GM10248 (cell line): ENCODE measurements at regions of chr6 and their contacts with region 1.

Region 1: GRCh38 chr6:88780714-88781389 is 182.6 kb downstream of the RNGTT start:
- DNase-seq: peak; percentile 22
- CTCF ChIP-seq: peak; percentile 50

Region 2: GRCh38 chr6:88761237-88762031 is 19.4 kb before region 1 on chr6:
- CTCF ChIA-PET with region 1: interaction called, 10 read pairs
- POLR2A ChIA-PET with region 1: no interaction called
- DNase-seq: peak; percentile 44
- CTCF ChIP-seq: peak; percentile 17